HEK293 (cell line): ENCODE measurements at regions of chr9 and their contacts with region 1.

Region 1: GRCh38 chr9:136790927-136791641 is at the start of gene TMEM141:
- H3K4me3 ChIP-seq: peak within 1 kb of the TSS; percentile 47
- H3K27ac ChIP-seq: peak within 1 kb of the TSS; percentile 74
- H3K4me1 ChIP-seq: peaks cover 7% of the 10 kb centered on the region
- CTCF ChIP-seq: no peak

Region 2: DNA sequence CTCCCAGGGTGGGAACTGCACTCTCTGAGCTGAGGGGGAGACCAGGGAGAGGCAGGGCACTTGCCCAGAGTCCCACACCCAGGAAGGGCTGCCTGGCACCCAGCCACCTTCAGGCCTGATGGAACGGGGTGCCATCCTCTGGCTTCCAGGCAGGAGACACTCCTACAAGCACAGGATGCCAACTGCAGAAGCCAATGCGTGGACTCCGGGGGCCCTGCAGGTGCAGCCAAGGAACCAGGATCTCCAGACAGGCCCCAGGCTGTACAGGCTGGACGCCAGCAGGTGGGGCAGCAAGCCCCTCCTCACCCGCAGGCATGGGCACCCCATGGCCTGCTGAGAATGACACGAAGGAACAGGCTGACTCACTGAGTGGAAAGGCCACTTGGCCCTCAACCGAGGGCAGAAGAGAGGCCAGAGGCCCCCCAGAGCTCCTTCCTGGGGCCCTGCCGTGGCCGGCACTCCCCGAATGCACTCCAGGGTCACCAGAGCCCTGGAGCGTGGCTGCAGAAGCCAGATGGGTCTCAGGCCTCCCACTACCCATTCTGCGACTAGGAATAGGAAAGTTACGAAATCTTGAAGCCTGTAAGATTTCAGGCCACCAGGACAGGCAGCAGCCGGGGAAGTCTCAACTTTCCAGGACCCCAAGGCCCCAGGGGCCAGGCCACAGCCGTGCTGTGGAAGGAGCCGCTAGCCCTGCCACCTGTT is 711.7 kb before region 1 on chr9:
- CTCF ChIA-PET with region 1: no interaction called
- POLR2A ChIA-PET with region 1: no interaction called
- H3K4me3 ChIP-seq: no peak overlapping the region
- H3K27ac ChIP-seq: no peak overlapping the region
- H3K4me1 ChIP-seq: no peaks in the 10 kb centered on the region
- CTCF ChIP-seq: peak; percentile 37; the same call in 1 of the 2 replicates

Region 3: GRCh38 chr9:136762915-136763648 is 28.0 kb before region 1 on chr9:
- CTCF ChIA-PET with region 1: interaction called, 27 read pairs
- POLR2A ChIA-PET with region 1: no interaction called
- H3K4me3 ChIP-seq: no peak overlapping the region
- H3K27ac ChIP-seq: no peak overlapping the region
- H3K4me1 ChIP-seq: no peaks in the 10 kb centered on the region
- CTCF ChIP-seq: no peak

Region 4: GRCh38 chr9:136775191-136775590 is 15.9 kb before region 1 on chr9:
- CTCF ChIA-PET with region 1: interaction called, 30 read pairs
- POLR2A ChIA-PET with region 1: interaction called, 6 read pairs
- H3K4me3 ChIP-seq: no peak overlapping the region
- H3K27ac ChIP-seq: no peak overlapping the region
- H3K4me1 ChIP-seq: no peaks in the 10 kb centered on the region
- CTCF ChIP-seq: no peak

Region 5: DNA sequence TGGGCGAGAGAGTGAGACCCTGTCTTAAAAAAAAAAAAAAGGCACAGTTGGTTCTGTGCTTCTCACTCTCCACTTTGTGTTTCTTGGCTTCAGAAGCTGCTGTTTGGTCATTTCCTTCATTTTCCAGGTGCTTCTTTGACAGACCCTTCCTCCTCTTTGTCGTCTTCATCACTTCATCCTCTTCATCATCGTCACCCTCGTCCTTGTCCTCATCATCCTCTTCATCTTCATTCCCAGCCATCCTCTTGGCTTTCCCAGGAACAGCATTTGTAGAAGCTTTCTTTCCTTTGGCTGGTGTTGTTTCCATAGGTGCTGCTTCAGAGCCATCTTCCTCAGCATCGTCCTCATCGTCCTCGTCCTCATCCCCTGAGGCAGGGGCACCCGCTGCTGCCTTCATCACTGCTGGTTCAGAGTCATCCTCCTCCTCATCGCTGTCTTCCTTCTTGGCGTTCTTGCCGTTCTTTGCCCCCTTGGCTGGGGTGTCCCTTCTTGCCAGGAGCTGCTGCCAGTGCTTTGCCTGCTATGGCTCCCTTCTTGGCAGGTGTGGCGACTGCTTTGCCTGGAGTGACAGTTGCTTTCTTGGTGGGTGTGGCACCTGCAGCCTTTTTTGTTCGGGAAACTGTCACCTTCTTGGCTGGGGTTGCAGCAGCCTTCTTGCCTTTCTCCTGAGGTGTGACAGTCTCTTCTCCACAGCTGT is 23.8 kb after region 1 on chr9:
- CTCF ChIA-PET with region 1: interaction called, 16 read pairs
- POLR2A ChIA-PET with region 1: no interaction called
- H3K4me3 ChIP-seq: no peak overlapping the region
- H3K27ac ChIP-seq: no peak overlapping the region
- H3K4me1 ChIP-seq: peaks cover 4% of the 10 kb centered on the region; the same call in 1 of the 2 replicates
- CTCF ChIP-seq: no peak

Region 6: GRCh38 chr9:137064027-137064879 is 273.2 kb after region 1 on chr9:
- CTCF ChIA-PET with region 1: interaction called, 11 read pairs
- POLR2A ChIA-PET with region 1: no interaction called
- H3K4me3 ChIP-seq: no peak overlapping the region
- H3K27ac ChIP-seq: no peak overlapping the region
- H3K4me1 ChIP-seq: peaks cover 3% of the 10 kb centered on the region; the same call in 1 of the 2 replicates
- CTCF ChIP-seq: peak; percentile 95

Region 7: DNA sequence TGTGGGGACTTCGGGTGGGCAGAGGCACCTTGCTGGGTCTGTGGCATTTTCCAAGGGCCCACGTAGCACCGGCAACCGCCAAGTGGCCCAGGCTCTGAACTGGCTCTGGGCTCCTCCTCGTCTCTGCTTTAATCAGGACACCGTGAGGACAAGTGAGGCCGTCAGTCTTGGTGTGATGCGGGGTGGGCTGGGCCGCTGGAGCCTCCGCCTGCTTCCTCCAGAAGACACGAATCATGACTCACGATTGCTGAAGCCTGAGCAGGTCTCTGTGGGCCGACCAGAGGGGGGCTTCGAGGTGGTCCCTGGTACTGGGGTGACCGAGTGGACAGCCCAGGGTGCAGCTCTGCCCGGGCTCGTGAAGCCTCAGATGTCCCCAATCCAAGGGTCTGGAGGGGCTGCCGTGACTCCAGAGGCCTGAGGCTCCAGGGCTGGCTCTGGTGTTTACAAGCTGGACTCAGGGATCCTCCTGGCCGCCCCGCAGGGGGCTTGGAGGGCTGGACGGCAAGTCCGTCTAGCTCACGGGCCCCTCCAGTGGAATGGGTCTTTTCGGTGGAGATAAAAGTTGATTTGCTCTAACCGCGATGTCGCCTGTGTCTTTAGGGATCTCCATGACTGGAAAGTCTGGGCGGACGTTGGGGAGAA is 317.6 kb after region 1 on chr9:
- CTCF ChIA-PET with region 1: no interaction called
- POLR2A ChIA-PET with region 1: no interaction called
- H3K4me3 ChIP-seq: no peak overlapping the region
- H3K27ac ChIP-seq: no peak overlapping the region
- H3K4me1 ChIP-seq: no peaks in the 10 kb centered on the region
- CTCF ChIP-seq: no peak